GM10248 (cell line): ENCODE measurements at regions of chr12 and their contacts with region 1.

Region 1: GRCh38 chr12:57583008-57583831 is 7.8 kb upstream of the PIP4K2C start:
- DNase-seq: peak; percentile 90
- CTCF ChIP-seq: peak; percentile 98

Region 2: GRCh38 chr12:57552835-57553313 is 30.3 kb before region 1 on chr12:
- CTCF ChIA-PET with region 1: interaction called, 27 read pairs
- POLR2A ChIA-PET with region 1: no interaction called
- DNase-seq: no peak
- CTCF ChIP-seq: no peak

Region 3: GRCh38 chr12:57611108-57611809 is 28.0 kb after region 1 on chr12 and contains the start of gene ARHGEF25:
- CTCF ChIA-PET with region 1: interaction called, 101 read pairs
- POLR2A ChIA-PET with region 1: interaction called, 3 read pairs
- DNase-seq: peak; percentile 84
- CTCF ChIP-seq: no peak

Region 4: DNA sequence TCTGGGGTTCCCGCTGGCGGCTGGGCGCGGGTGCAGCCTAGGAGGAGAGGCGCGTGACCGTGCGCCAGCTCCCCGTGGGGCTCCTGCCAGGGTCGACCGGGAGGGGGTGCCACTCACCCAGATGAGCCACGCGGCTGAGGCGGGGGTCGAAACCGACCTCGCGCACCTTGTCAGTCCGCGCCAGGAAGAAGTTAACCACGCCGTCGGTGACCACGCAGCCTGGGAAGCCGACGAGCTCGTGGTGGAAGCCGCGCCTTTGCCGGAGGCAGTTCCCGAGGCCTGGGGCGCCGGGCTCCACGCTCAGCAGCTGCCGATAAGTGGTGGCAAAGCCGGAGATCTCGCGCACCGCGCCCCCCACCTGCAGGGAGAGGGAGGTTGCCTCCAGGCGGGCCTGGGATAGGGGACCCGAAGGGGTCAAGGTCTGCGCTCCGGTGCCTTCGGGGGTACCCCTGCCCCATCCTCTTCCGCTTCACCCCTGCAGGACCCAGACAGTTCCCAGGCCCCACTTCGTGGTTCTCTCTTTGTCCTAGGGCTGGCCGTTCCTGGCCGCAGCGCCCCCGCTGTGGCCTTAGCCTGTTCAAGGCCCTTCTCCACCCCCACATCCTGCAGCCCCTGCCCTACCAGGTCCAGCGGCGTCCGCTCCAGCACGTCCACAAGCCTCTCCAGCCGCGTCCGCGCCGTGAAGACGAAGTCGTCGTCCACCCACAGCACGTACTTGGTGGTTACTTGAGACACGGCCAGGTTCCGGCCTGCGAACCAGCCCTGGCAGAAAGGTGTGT is 44.5 kb after region 1 on chr12:
- CTCF ChIA-PET with region 1: interaction called, 155 read pairs
- POLR2A ChIA-PET with region 1: no interaction called
- DNase-seq: no peak
- CTCF ChIP-seq: peak; percentile 30

Region 5: GRCh38 chr12:57693659-57694458 is 110.6 kb after region 1 on chr12 and contains the start of gene OS9:
- CTCF ChIA-PET with region 1: interaction called, 29 read pairs
- POLR2A ChIA-PET with region 1: no interaction called
- DNase-seq: peak; percentile 95
- CTCF ChIP-seq: peak; percentile 75

Region 6: DNA sequence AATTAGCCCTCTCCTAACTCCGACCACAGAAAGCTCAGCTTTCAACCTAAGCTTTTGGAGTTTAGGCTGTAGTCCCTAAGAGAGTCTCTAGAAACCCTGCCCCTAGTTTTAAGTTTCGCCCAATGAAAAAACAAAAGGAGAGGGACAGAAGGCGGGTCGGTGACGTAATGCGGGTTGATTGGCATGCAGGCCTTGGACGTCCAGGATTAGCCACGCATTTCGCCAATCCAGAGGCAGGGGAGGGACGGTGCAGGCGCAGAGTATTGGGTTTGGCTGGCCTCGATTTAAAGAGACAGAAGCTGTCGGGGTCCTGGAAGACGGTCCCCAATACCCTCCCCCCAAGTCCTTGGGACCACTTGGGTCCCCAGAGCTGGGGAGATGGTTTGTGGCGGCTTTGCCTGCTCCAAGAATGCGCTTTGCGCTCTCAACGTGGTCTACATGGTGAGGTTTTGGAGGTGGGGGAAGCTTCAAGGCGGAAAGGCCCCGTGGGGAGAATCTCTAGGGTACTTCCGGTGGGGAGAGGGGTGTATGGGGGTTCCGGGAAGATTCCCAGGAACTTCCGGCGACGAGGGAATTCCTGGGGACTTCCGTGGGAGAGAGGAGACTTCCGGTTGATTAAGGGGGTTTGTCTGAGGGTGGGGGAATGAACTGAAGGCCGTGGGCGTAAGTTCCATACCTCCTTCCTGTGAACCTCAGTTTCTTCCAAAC is 161.7 kb after region 1 on chr12 and contains the start of gene TSPAN31:
- CTCF ChIA-PET with region 1: interaction called, 19 read pairs
- POLR2A ChIA-PET with region 1: no interaction called
- DNase-seq: peak; percentile 92
- CTCF ChIP-seq: no peak